Common myeloid progenitor, CD34-positive (primary cell): ENCODE measurements at regions of chr12 and their contacts with region 1.

Region 1: DNA sequence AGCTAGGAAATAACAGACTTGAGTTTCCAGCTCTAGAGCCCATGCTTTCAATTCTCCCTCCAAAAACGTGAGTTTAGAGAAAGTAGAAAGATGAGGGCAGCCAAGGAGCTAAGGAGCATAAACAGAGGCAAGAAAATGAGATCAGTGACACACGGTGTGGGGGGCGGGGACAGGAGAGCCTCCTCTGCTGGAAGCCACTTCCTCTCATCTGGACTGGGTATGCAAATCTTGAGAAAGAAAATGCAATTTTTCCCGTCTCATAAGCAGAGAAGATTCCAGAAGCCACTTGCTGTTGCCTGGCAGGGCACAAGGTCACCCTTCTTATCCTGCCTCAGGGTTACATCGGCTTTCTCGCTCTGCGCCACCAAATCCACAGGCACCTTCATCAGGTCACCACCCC is 6.0 kb downstream of the OR10P1 start:
- DNase-seq: peak in 2 of 3 donors; percentile 28 to 35
- H3K4me3 ChIP-seq: no peak overlapping the region
- H3K27ac ChIP-seq: no peak overlapping the region
- H3K4me1 ChIP-seq: peaks cover 0 to 32% (median 11%) of the 10 kb centered on the region in 4 experiments
- H3K27me3 ChIP-seq: no peaks in the 10 kb centered on the region

Region 2: GRCh38 chr12:55607821-55608594 is 34.7 kb before region 1 on chr12:
- CTCF ChIA-PET with region 1: no interaction called
- POLR2A ChIA-PET with region 1: no interaction called
- DNase-seq: no peak
- H3K4me3 ChIP-seq: no peak overlapping the region
- H3K27ac ChIP-seq: no peak overlapping the region
- H3K4me1 ChIP-seq: no peaks in the 10 kb centered on the region
- H3K27me3 ChIP-seq: peaks cover 0 to 2% (median 0%) of the 10 kb centered on the region in 5 experiments

Region 3: GRCh38 chr12:55631733-55632132 is 10.9 kb before region 1 on chr12:
- CTCF ChIA-PET with region 1: interaction called, 10 read pairs
- POLR2A ChIA-PET with region 1: no interaction called
- DNase-seq: no peak
- H3K4me3 ChIP-seq: no peak overlapping the region
- H3K27ac ChIP-seq: no peak overlapping the region
- H3K4me1 ChIP-seq: peaks cover 0 to 11% (median 0%) of the 10 kb centered on the region in 4 experiments
- H3K27me3 ChIP-seq: no peaks in the 10 kb centered on the region

Region 4: GRCh38 chr12:55659486-55660385 is 17.1 kb after region 1 on chr12:
- CTCF ChIA-PET with region 1: interaction called, 87 read pairs
- POLR2A ChIA-PET with region 1: interaction called, 3 read pairs
- DNase-seq: peak in 2 of 3 donors; percentile 47 to 50
- H3K4me3 ChIP-seq: no peak overlapping the region
- H3K27ac ChIP-seq: no peak overlapping the region
- H3K4me1 ChIP-seq: no peaks in the 10 kb centered on the region
- H3K27me3 ChIP-seq: peaks cover 0 to 10% (median 0%) of the 10 kb centered on the region in 5 experiments